ENCODE measurements at regions of chr4 and their contacts with region 1.

Region 1: DNA sequence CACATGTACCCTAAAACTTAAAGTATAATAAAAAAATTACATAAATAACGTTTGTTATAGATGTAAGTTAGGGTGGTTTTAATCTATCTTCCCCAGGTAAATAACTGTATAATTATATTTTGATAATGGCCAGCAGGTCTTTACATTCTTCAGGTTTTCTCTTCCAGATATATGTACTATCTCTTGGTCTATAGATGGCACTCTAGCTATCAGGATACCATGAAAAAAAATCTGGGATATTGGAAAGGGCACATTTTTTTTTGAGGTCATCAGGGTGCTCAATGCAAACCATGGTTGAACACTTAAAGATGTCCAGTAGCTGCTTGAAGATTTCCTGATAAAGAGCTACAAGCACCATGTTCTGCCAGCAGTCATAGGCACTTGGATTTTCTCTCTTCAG is 15.6 kb upstream of the ADH4 start:
- DNase-seq: no peak
- H3K4me3 ChIP-seq: no peak overlapping the region
- H3K4me3 Mint-ChIP-seq: no peak overlapping the region
- H3K27ac Mint-ChIP-seq: no peak overlapping the region
- H3K4me1 ChIP-seq: peaks cover 29% of the 10 kb centered on the region
- H3K4me1 Mint-ChIP-seq: peaks cover 24% of the 10 kb centered on the region
- H3K27me3 ChIP-seq: no peaks in the 10 kb centered on the region
- H3K27me3 Mint-ChIP-seq: no peaks in the 10 kb centered on the region
- CTCF ChIP-seq: no peak

Region 2: DNA sequence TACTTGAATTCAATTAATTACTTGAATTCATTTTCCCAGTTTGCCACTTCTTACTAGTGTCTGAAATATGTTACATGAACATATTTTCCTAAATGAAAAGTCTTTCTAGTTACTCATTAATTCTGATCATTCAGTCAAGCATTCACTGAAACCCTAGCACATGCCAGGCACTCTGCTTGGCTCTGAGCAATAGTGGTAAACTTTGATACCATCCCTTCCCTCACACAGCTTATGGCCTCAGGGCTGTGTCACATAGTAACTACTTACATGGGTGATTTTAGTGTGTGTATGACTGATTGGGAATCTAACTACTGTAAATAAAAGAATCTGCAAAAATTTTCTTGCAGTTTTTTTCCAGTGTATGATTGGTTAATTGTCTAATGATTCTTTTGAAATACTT is 131.5 kb before region 1 on chr4:
- CTCF ChIA-PET with region 1: no interaction called
- POLR2A ChIA-PET with region 1: no interaction called
- intact Hi-C with region 1: loop called (anchors 5 kb)
- DNase-seq: no peak
- H3K4me3 ChIP-seq: no peak overlapping the region; the same call in 1 of the 2 replicates
- H3K4me3 Mint-ChIP-seq: peak overlapping the region; percentile 53
- H3K27ac Mint-ChIP-seq: peak overlapping the region; percentile 99
- H3K4me1 ChIP-seq: peaks cover 59% of the 10 kb centered on the region
- H3K4me1 Mint-ChIP-seq: peaks cover 36% of the 10 kb centered on the region
- H3K27me3 ChIP-seq: no peaks in the 10 kb centered on the region
- H3K27me3 Mint-ChIP-seq: no peaks in the 10 kb centered on the region
- CTCF ChIP-seq: no peak

Region 3: GRCh38 chr4:99144070-99144469 is 15.6 kb before region 1 on chr4 and contains the start of gene ADH4:
- CTCF ChIA-PET with region 1: no interaction called
- POLR2A ChIA-PET with region 1: no interaction called
- intact Hi-C with region 1: loop called (anchors 1 kb)
- DNase-seq: peak in 1 of 2 experiments; percentile 19
- H3K4me3 ChIP-seq: no peak within 1 kb of the TSS; the same call in 1 of the 2 replicates
- H3K4me3 Mint-ChIP-seq: no peak within 1 kb of the TSS
- H3K27ac Mint-ChIP-seq: peak within 1 kb of the TSS; percentile 34
- H3K4me1 ChIP-seq: no peaks in the 10 kb centered on the region
- H3K4me1 Mint-ChIP-seq: peaks cover 10% of the 10 kb centered on the region
- H3K27me3 ChIP-seq: no peaks in the 10 kb centered on the region
- H3K27me3 Mint-ChIP-seq: no peaks in the 10 kb centered on the region
- CTCF ChIP-seq: no peak
- total RNA-seq, gene ADH4: 2.2 and 2.5 TPM in 2 replicates

Region 4: GRCh38 chr4:99219479-99219878 is 59.8 kb after region 1 on chr4:
- CTCF ChIA-PET with region 1: no interaction called
- POLR2A ChIA-PET with region 1: no interaction called
- intact Hi-C with region 1: loop called (anchors 1 kb)
- DNase-seq: no peak
- H3K4me3 ChIP-seq: no peak overlapping the region
- H3K4me3 Mint-ChIP-seq: peak overlapping the region; percentile 54
- H3K27ac Mint-ChIP-seq: no peak overlapping the region
- H3K4me1 ChIP-seq: peaks cover 35% of the 10 kb centered on the region
- H3K4me1 Mint-ChIP-seq: peaks cover 19% of the 10 kb centered on the region
- H3K27me3 ChIP-seq: no peaks in the 10 kb centered on the region
- H3K27me3 Mint-ChIP-seq: no peaks in the 10 kb centered on the region
- CTCF ChIP-seq: no peak

Region 5: GRCh38 chr4:99248714-99249113 is 89.0 kb after region 1 on chr4:
- CTCF ChIA-PET with region 1: no interaction called
- POLR2A ChIA-PET with region 1: no interaction called
- intact Hi-C with region 1: no loop called
- DNase-seq: no peak
- H3K4me3 ChIP-seq: no peak overlapping the region
- H3K4me3 Mint-ChIP-seq: no peak overlapping the region
- H3K27ac Mint-ChIP-seq: no peak overlapping the region
- H3K4me1 ChIP-seq: no peaks in the 10 kb centered on the region
- H3K4me1 Mint-ChIP-seq: no peaks in the 10 kb centered on the region
- H3K27me3 ChIP-seq: no peaks in the 10 kb centered on the region
- H3K27me3 Mint-ChIP-seq: no peaks in the 10 kb centered on the region
- CTCF ChIP-seq: no peak

Region 6: GRCh38 chr4:99563310-99564186 is 403.8 kb after region 1 on chr4 and contains the start of gene TRMT10A:
- CTCF ChIA-PET with region 1: no interaction called
- POLR2A ChIA-PET with region 1: no interaction called
- intact Hi-C with region 1: loop called (anchors 10 kb)
- DNase-seq: peak; percentile 94 to 96
- H3K4me3 ChIP-seq: peak within 1 kb of the TSS; percentile 89
- H3K4me3 Mint-ChIP-seq: peak within 1 kb of the TSS; percentile 94
- H3K27ac Mint-ChIP-seq: peak within 1 kb of the TSS; percentile 99
- H3K4me1 ChIP-seq: no peaks in the 10 kb centered on the region
- H3K4me1 Mint-ChIP-seq: no peaks in the 10 kb centered on the region
- H3K27me3 ChIP-seq: no peaks in the 10 kb centered on the region
- H3K27me3 Mint-ChIP-seq: no peaks in the 10 kb centered on the region
- CTCF ChIP-seq: no peak
- total RNA-seq, gene TRMT10A: 5.1 and 5.8 TPM in 2 replicates

Measured in Caco-2 (cell line).